ENCODE measurements at regions of chr1 and their contacts with region 1.

Region 1: DNA sequence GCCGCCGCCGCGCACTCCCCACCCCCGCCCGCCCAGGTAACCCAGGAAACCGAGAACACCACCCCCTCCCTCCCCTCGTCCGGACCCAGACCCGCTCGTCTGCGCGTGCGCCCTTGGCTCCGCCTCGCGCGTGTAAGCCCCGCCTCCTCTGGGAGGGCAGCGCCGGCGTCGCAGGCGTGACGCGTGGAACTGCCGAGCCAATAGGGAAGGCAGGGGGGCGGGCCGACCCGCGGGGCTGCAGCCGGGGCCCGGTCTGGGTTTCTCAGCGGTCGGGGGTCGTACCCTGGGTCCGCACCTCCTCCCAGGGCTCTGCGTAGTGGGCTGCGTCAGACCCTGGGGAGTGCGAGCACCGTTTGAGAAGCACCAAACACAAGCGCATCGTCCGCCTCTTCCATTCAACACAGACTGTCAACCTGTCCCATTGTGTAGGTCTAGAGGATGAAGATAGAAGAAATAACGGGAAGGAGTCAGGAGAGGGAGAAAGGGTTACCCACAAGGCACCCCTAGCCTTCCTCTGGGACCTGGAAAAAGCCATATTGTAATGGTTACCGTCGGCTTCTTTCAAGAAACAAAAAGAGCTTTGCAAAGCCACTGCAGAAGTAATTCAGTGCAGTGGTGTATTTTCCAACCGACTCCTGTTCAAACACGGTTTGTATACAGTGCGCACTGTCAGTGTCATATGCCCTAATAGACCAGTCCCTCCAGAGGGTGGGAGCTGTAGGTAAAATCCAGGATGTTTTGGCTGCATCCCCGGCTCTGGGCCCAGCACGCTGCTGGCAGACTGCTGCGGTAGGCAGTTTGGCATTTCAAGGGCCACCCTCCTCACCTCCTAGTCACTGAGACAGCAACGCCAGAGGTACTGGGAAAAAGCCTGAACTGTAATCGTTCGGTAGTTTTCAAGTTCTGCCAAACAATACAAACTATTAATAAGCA is 473 bp upstream of the LYST start:
- DNase-seq: peak; percentile 98
- ATAC-seq: peak; percentile 99

Region 2: GRCh38 chr1:234997201-234997895 is 869.8 kb before region 1 on chr1:
- intact Hi-C with region 1: no loop called
- DNase-seq: peak; percentile 98
- ATAC-seq: peak; percentile 94

Region 3: DNA sequence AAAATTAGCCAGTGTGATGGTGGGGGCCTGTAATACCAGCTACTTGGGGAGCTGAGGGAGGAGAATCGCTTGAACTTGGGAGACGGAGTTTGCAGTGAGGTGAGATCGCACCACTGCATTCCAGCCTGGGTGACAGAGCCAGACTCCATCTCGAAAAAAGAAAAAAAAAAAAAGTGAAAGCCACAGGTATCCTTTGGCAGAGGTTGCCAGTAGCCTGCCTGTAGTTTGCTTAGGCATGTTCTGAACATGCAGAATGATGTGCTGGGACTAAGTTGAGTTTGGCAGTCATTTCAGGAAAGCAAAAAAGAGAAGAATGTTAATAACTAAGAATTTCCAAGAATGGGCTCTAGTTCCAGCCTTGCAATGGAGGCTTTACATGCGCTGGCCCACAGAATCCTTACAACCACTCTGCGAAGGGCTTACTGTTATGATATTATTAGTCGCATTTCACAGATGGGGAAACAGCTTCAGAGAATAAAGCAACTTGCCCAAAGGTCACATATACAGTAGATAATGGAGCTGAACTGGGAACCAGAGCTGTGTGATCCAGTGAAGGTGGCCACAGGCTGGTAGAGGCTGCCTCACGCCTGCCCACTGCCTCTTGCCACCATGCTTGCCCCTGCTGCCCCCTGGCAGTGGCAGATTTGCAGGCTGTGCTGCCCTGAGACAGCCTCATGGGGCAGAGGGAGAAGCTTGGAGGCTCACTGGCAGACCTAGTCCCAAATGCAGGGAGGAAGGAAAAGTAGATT is 66.0 kb after region 1 on chr1:
- intact Hi-C with region 1: no loop called
- DNase-seq: no peak
- ATAC-seq: peak; percentile 61

Region 4: GRCh38 chr1:235971571-235972310 is 104.6 kb after region 1 on chr1:
- intact Hi-C with region 1: loop called (anchors 10 kb)
- DNase-seq: peak; percentile 95
- ATAC-seq: peak; percentile 91

Region 5: DNA sequence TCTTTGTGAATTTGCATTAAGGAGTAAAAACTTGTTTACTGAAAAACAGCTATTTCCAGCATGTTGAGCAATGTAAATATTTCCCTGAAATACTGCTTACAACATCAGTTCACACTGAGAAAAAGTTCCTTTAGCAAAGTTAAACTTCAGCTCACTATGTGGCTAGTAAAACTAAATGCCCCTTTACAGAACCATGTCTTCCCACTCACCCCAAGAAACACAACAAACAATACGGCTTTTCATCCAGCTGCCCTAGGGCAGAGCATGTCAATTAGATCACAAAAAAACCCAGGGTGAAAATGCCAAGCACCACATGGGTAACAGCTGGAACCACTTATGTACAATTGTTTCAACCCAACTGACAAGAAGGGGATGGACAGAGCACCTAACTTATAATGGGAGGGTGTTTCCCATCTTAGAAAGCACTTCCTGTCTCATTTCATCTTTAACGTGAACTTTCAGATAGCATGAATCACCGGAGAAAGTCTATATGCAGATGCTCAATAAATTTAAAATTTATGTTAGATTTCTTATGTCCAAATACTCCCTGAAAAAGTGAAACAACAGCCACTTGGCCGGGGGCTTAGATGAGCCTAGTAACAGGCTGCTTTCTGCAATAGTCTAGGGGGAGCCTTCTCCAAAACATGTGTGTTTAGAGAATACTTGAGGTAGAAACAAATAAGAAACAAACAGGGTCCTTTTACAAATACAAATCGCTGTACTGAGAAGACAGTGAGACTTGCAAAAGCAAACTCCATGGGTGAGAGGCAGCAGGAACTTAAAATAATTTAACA is 191.2 kb after region 1 on chr1:
- intact Hi-C with region 1: no loop called
- DNase-seq: no peak
- ATAC-seq: no peak

Measured in Right ventricle myocardium superior (tissue), 1 donor.